Colonic mucosa (tissue), 4 donors: ENCODE measurements at regions of chr15 and their contacts with region 1.

Region 1: GRCh38 chr15:92797168-92797951 is 102.8 kb upstream of the CHD2 start:
- DNase-seq: peak; percentile 62
- H3K4me3 ChIP-seq: no peak overlapping the region
- H3K27ac ChIP-seq: no peak overlapping the region
- H3K4me1 ChIP-seq: no peaks in the 10 kb centered on the region
- H3K27me3 ChIP-seq: no peaks in the 10 kb centered on the region
- CTCF ChIP-seq: peak; percentile 78

Region 2: GRCh38 chr15:92917606-92918407 is 120.4 kb after region 1 on chr15:
- intact Hi-C with region 1: loop called (anchors 5 kb)
- DNase-seq: peak; percentile 99
- H3K4me3 ChIP-seq: no peak overlapping the region
- H3K27ac ChIP-seq: peak overlapping the region; percentile 76
- H3K4me1 ChIP-seq: peaks cover 31% of the 10 kb centered on the region
- H3K27me3 ChIP-seq: no peaks in the 10 kb centered on the region
- CTCF ChIP-seq: peak; percentile 84

Region 3: GRCh38 chr15:93030430-93031105 is 233.2 kb after region 1 on chr15:
- intact Hi-C with region 1: loop called (anchors 10 kb)
- DNase-seq: peak; percentile 73
- H3K4me3 ChIP-seq: no peak overlapping the region
- H3K27ac ChIP-seq: peak overlapping the region; percentile 70
- H3K4me1 ChIP-seq: peaks cover 7% of the 10 kb centered on the region
- H3K27me3 ChIP-seq: no peaks in the 10 kb centered on the region
- CTCF ChIP-seq: peak; percentile 82

Region 4: DNA sequence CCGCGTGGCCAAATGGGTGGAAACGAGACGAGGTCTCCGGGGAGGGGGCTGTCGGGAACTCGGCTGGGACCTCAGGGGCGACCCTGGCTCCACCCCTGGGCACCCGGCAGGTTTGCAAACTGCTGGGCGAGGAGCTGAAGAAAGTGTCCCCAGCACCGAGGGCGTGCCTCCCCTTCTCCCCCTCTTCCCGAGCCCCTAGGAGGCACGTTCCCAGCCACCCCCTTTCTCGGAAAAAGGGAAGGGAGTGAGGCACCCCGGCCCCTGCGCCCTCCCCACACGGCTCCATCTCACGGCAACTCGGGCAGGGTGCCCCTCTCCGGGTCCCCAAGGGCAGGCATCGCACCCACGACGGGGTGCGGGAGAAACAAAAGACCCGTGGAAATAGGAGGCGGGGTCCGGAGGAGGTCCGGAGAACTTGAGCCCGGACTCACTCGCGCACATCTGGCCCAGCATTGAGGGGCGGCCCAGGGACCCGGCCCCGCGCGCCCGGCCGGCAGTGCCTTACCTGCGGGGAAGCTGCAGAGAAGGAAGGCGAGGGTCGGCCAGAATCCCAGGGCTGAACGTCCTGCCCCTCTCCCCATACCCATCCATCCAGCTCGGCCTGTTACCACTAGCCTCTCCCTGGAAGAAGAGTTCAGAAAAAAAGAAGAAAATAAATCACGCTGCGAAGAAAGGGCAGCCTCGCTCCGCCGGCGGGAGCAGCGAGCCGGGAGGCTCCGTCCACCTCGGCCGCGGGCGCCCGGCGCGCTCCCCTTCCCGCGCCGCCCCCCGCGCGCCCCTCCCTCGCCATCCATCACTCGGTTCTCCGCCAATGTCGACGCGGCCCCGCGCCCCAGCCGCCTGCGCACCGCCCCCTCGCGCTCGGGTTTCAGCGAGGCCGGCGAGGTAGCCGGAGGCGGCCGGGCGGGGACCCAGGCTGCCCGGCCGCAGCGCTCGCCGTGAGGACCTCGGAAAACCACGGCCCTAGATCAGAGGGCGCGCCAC is 275.3 kb after region 1 on chr15:
- intact Hi-C with region 1: no loop called
- DNase-seq: peak; percentile 65
- H3K4me3 ChIP-seq: peak overlapping the region; percentile 32
- H3K27ac ChIP-seq: peak overlapping the region; percentile 50
- H3K4me1 ChIP-seq: no peaks in the 10 kb centered on the region
- H3K27me3 ChIP-seq: peaks cover 30% of the 10 kb centered on the region
- CTCF ChIP-seq: no peak